ENCODE measurements at regions of chr12 and their contacts with region 1.

Region 1: DNA sequence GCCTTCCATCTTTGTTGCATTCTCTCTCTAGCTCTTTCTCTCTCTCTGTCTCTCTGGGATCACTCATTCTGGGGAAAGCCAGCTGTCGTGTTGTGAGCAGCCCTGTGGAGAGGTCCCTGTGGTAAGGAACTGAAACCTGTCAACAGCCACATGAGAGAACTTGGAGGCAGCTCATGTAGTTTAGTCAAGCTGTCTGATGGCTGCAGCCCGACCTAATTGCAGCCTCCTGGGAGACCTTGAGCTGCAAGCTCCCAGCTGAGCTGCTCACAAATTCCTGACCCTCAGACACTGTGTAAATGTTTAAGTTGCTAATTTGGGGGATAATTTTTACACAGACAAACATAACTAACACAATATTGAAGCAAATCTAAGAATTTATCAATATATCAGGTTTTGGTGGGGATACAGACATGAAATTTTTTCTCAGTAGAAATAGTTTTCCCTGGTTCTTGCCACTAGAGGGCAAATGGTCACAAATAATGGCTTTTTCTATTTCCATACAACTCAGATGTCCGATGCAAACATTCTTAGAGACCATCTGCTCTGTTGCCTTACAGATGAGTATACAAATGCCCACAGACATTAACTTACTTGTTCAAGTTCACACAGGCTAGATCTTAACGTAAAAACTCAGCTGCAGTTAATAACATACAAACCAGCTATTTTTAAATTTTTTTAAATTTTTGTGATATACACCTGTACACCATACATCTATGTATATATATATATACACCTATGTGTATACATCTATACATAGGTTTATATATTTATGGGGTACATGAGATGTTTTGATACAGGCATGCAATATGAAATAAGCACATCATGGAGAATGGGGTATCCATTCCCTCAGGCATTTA is 15.5 kb upstream of the KRR1 start:
- DNase-seq: no peak
- H3K4me3 ChIP-seq: no peak overlapping the region
- H3K27ac ChIP-seq: no peak overlapping the region
- H3K4me1 ChIP-seq: no peaks in the 10 kb centered on the region
- H3K27me3 ChIP-seq: no peaks in the 10 kb centered on the region
- CTCF ChIP-seq: peak; percentile 53 to 75 (median 64)
- POLR2A ChIP-seq: no peak

Region 2: DNA sequence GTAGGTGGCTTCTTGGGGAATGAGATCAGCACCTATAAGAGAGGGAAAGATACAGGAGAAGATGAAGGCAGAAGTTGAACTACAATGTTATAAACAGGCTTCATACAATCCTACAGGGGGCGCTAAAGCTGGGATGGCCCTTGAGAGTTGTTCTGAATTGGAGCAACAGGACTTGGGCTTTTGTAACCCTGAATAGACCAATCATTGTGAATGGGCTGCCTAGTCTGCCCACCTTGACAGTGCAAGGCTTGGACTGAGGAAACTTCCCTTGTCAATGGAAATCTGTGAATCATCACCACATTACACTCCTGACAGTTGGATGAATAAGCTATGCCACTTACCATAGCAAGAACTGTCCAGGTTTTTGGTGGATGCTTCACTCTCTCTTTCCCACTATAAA is 623.4 kb before region 1 on chr12:
- intact Hi-C with region 1: no loop called
- DNase-seq: no peak
- H3K4me3 ChIP-seq: no peak overlapping the region
- H3K27ac ChIP-seq: no peak overlapping the region
- H3K4me1 ChIP-seq: no peaks in the 10 kb centered on the region
- H3K27me3 ChIP-seq: no peaks in the 10 kb centered on the region
- CTCF ChIP-seq: no peak
- POLR2A ChIP-seq: no peak

Region 3: DNA sequence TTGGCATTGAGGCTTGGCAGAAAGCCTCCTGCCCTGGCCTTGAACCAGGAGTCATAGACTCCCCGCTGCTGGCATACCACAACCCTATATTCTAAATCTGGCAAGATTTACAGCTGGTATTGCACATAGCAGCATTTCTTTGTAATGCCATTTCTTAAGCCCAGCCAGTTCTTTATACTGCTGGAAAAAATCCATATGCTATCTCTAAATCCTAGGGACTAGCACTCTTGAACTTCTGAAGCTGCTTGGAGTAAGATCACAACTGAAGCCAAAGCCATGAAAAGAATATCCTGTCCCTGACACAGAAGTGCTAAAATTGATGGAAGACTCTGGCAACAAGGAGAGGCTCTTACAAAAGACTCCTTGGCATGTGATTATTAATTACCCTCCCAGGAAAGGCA is 406.6 kb before region 1 on chr12:
- intact Hi-C with region 1: no loop called
- DNase-seq: no peak
- H3K4me3 ChIP-seq: no peak overlapping the region
- H3K27ac ChIP-seq: no peak overlapping the region
- H3K4me1 ChIP-seq: no peaks in the 10 kb centered on the region
- H3K27me3 ChIP-seq: no peaks in the 10 kb centered on the region
- CTCF ChIP-seq: no peak
- POLR2A ChIP-seq: no peak

Region 4: DNA sequence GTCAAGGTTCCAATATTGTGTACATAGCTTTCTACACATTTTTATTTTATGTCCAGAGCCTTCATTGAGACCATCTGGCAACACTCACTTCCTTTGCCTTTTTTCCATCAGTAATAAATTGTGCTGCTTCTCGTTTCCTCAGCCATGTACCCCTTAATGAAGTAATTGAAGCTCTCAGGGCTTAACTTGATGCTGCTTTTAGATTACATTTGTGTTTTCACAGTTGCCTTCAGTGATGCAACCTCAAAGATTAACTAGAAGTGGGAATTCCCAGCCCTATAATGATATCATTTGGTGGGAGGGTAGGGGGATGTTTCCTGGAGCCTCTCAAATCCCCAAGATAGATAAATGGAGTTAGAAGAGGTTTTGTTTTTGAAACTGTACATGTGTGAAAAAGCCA is 64.7 kb after region 1 on chr12:
- intact Hi-C with region 1: no loop called
- DNase-seq: no peak
- H3K4me3 ChIP-seq: no peak overlapping the region
- H3K27ac ChIP-seq: no peak overlapping the region
- H3K4me1 ChIP-seq: no peaks in the 10 kb centered on the region
- H3K27me3 ChIP-seq: no peaks in the 10 kb centered on the region
- CTCF ChIP-seq: no peak
- POLR2A ChIP-seq: no peak

Region 5: DNA sequence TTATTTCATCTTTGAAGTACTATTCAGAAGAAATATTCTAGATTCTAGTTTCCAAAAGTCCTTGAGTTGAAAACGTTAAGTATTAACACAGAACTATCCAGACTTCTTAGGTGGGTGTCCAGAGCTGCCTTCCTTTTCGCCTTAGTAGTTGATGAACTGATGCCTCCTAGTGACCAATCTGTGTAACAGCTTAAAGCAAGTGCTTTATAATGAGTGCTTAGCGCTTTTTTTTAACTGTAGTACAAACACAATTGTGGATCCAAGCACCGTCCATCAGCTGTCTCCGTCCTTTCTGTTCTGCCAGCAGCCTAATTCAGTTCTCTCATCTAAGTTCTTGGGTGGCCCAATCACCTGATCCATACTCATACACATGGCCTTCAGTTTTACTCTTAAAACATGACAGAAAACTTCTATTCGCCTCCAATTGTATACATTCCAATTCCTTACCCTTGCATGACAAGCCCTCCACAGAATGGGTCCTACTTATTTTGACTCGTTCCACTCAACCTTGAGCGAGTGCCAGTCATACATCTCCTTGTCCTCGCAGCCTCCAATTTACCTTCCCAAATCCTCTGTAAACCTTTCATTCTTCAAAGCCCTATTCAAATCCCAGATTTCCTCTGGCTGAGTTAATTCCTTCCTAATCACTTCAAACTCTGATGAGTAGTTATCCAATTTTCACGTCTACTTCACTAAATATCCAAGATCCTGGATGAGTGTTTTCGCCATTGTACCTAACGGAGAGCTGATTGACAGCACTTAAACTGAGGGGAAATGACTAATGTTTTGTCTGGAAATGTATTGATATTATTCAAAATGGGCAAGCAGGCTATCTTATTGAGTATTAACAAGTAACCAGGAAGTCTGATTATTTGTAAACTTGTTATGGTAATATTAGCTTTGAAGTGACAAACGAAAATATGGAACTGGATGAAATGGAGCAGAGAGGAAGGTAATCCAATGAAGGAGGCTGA is 510.5 kb after region 1 on chr12:
- intact Hi-C with region 1: loop called (anchors 5 kb)
- DNase-seq: peak; percentile 42
- H3K4me3 ChIP-seq: no peak overlapping the region
- H3K27ac ChIP-seq: no peak overlapping the region
- H3K4me1 ChIP-seq: no peaks in the 10 kb centered on the region
- H3K27me3 ChIP-seq: no peaks in the 10 kb centered on the region
- CTCF ChIP-seq: peak; percentile 29 to 86 (median 77)
- POLR2A ChIP-seq: no peak

Region 6: DNA sequence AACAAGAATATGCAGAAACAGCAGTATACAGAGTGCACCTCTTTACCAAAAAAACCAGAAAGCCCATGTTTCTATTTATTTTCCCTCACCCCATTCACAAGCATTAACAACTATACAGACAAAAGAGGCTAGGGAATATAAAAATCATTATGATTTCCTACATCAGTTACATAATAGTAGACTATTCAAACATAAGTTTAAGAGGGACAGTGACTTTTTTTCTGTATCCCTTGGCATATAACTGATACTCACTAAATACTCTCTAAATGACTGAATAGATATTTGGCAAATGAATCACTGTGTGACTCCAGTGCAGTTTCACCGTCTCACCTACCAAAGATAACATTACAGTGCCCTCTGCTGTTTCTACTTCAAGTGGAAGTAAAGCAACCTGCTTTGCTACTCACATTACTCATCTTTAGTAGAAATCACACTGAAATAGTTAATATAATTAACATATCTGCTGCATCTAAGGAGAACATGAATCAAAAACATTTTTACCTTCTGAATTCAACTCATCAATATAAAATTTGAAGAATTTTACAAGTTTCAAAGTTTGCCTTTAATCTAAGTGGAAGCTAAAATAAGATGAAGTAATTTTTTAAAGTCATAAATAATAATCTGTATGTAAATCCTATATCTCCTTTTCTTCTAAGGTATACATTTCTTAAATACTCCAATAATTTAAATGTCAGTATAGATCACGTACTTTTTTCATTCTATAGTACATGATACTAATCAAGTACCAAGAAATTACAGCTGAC is 928.9 kb after region 1 on chr12:
- intact Hi-C with region 1: loop called (anchors 10 kb)
- DNase-seq: peak; percentile 14
- H3K4me3 ChIP-seq: no peak overlapping the region
- H3K27ac ChIP-seq: no peak overlapping the region
- H3K4me1 ChIP-seq: no peaks in the 10 kb centered on the region
- H3K27me3 ChIP-seq: no peaks in the 10 kb centered on the region
- CTCF ChIP-seq: peak in 3 of 4 experiments; percentile 53 to 66 (median 62)
- POLR2A ChIP-seq: no peak

Measured in prostate gland (tissue), 2 donors.